ENCODE measurements at regions of chr5 and their contacts with region 1.

Region 1: GRCh38 chr5:141701360-141702119 is 19.5 kb upstream of the ARAP3 start:
- DNase-seq: no peak
- H3K4me3 ChIP-seq: peak overlapping the region; percentile 65
- H3K27ac ChIP-seq: peak overlapping the region; percentile 75
- H3K4me1 ChIP-seq: peaks cover 25% of the 10 kb centered on the region
- H3K27me3 ChIP-seq: peaks cover 66% of the 10 kb centered on the region
- CTCF ChIP-seq: no peak

Region 2: GRCh38 chr5:140966293-140967225 is 735.0 kb before region 1 on chr5 and contains the start of gene PCDHAC2:
- intact Hi-C with region 1: no loop called
- DNase-seq: peak; percentile 19
- H3K4me3 ChIP-seq: peak within 1 kb of the TSS; percentile 69
- H3K27ac ChIP-seq: no peak within 1 kb of the TSS
- H3K4me1 ChIP-seq: peaks cover 17% of the 10 kb centered on the region
- H3K27me3 ChIP-seq: peaks cover 77% of the 10 kb centered on the region
- CTCF ChIP-seq: no peak
- total RNA-seq, gene PCDHAC2: 0.36 TPM

Region 3: DNA sequence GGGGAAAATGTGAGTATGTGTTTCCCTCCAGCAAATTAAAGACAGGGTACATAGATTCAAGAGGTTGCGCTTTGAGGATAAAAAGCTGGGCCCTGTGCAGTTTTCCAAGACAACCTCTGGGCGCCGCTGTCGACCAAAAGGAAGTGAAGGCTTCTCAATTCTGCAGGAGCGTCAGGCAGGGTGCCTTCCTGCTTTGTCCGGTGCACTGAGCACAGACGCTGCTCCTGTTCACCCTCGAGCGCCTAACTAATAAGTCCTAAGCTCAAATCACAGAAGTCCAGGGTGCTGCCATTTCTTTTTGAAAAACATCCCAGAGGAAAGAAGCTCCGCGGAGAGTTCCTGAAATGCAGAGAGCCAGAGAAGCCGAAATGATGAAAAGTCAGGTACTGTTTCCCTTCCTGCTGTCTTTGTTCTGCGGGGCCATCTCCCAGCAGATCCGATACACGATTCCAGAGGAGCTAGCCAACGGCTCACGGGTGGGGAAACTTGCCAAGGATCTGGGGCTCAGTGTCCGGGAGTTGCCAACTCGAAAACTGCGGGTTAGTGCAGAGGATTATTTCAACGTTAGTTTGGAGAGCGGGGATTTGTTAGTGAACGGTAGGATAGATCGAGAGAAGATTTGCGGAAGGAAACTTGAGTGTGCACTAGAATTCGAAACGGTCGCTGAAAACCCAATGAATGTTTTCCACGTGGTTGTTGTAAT is 351.5 kb before region 1 on chr5 and contains the start of gene PCDHGB1:
- intact Hi-C with region 1: no loop called
- DNase-seq: no peak
- H3K4me3 ChIP-seq: peak within 1 kb of the TSS; percentile 54
- H3K27ac ChIP-seq: peak within 1 kb of the TSS; percentile 50
- H3K4me1 ChIP-seq: peaks cover 59% of the 10 kb centered on the region
- H3K27me3 ChIP-seq: no peaks in the 10 kb centered on the region
- CTCF ChIP-seq: peak; percentile 74
- total RNA-seq, gene PCDHGB1: 5.7 TPM

Region 4: DNA sequence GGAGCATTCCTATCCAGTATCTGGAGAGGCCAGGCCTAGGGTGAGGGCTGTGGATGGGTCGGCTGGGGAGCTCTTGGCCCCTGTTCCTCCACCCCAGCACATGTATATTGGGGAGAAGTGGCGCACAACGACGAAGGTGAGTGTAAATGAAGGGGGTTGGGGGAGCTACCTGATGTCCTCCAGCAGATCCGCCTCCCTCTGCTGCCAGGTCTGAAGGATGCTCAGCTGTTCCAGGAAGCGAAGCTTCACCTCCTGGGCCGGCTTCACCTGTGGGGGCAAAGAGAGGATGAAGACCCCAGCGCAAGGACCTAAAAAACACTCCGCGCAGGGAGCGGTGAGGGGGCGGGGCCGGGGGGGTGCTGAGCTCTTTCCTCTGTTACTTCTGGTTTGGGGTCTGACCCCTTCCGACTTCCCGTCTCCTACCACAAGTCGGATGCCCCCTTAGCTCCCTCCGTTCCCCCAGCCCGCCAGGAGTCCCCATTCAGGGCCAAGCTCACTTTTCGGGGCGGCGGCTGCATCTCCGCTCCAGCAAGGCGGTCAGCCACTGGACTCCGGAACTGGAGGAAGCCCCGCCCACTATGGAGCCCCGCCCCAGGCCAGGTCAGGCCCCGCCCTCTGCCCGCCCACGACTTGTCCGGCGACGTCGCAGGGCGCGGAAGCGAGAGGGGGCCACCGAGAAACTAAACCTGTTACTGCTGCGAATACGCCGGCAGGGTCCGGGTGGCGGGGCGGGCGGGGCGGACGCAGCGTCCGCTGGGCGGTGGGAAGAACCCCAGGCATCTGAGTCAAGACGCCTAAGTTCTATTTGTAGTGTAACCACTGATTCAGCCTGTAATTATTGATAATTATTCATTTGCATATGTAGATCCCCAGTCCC is 50.5 kb before region 1 on chr5 and contains the start of gene FCHSD1:
- intact Hi-C with region 1: no loop called
- DNase-seq: peak; percentile 90
- H3K4me3 ChIP-seq: peak within 1 kb of the TSS; percentile 72
- H3K27ac ChIP-seq: peak within 1 kb of the TSS; percentile 29
- H3K4me1 ChIP-seq: peaks cover 16% of the 10 kb centered on the region
- H3K27me3 ChIP-seq: no peaks in the 10 kb centered on the region
- CTCF ChIP-seq: peak; percentile 21
- total RNA-seq, gene FCHSD1: 4.7 TPM

Region 5: GRCh38 chr5:141811287-141812155 is 110.0 kb after region 1 on chr5:
- intact Hi-C with region 1: loop called (anchors 10 kb)
- DNase-seq: no peak
- H3K4me3 ChIP-seq: no peak overlapping the region
- H3K27ac ChIP-seq: peak overlapping the region; percentile 86
- H3K4me1 ChIP-seq: peaks cover 73% of the 10 kb centered on the region
- H3K27me3 ChIP-seq: peaks cover 61% of the 10 kb centered on the region
- CTCF ChIP-seq: peak; percentile 65

Region 6: GRCh38 chr5:141878711-141879425 is 177.3 kb after region 1 on chr5:
- intact Hi-C with region 1: loop called (anchors 10 kb)
- DNase-seq: peak; percentile 86
- H3K4me3 ChIP-seq: peak overlapping the region; percentile 83
- H3K27ac ChIP-seq: peak overlapping the region; percentile 95
- H3K4me1 ChIP-seq: peaks cover 95% of the 10 kb centered on the region
- H3K27me3 ChIP-seq: peaks cover 83% of the 10 kb centered on the region
- CTCF ChIP-seq: peak; percentile 98

Measured in left ventricle myocardium inferior (tissue), 1 donor.